Tibial artery (tissue), 4 donors: ENCODE measurements at regions of chr2 and their contacts with region 1.

Region 1: GRCh38 chr2:176653479-176654443 is 384.5 kb downstream of the MTX2 start:
- DNase-seq: peak; percentile 44 to 70
- H3K4me3 ChIP-seq: no peak overlapping the region
- H3K27ac ChIP-seq: no peak overlapping the region
- H3K4me1 ChIP-seq: peaks cover 0 to 6% (median 3%) of the 10 kb centered on the region in 4 donors
- H3K27me3 ChIP-seq: no peaks in the 10 kb centered on the region
- CTCF ChIP-seq: peak; percentile 67 to 77

Region 2: GRCh38 chr2:176445956-176446355 is 207.8 kb before region 1 on chr2:
- intact Hi-C with region 1: no loop called
- DNase-seq: no peak
- H3K4me3 ChIP-seq: no peak overlapping the region
- H3K27ac ChIP-seq: no peak overlapping the region
- H3K4me1 ChIP-seq: no peaks in the 10 kb centered on the region
- H3K27me3 ChIP-seq: no peaks in the 10 kb centered on the region
- CTCF ChIP-seq: no peak

Region 3: GRCh38 chr2:176619504-176619903 is 34.3 kb before region 1 on chr2:
- intact Hi-C with region 1: no loop called
- DNase-seq: no peak
- H3K4me3 ChIP-seq: no peak overlapping the region
- H3K27ac ChIP-seq: no peak overlapping the region
- H3K4me1 ChIP-seq: no peaks in the 10 kb centered on the region
- H3K27me3 ChIP-seq: peaks cover 0 to 8% of the 10 kb centered on the region in 2 donors
- CTCF ChIP-seq: no peak

Region 4: DNA sequence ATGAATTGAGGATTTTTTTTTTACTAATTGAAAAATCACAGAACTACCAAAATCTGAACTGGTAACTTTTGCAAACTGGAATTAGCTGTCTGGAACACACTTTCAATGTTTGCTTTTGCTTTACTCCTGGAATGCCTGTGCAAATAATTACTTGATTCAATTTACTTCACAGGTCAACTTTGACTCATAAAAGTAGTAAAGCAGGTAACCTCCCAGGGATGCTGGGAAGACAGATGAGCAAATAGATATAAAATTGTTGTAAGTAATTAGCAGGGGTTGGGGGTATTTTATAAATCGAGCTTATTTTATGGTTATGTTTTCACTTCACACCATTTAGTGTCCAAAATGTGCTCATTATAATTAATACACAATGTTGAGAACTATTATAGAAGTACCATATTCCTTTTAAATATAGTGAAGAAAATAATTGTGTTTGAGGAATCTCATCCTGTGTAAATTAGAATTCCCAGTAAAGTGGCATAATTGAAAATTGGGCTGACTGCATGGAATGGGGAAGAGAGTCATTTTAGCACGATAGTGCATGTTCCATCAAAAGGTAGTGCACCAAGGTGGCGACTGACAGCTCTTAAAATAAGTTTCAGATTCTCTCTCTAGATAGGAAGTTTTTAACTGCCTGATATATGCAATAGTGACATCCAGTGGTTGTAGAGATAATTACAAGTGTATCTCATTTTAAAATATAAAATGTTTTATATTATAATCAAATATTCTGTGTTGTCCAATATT is 160.7 kb after region 1 on chr2:
- intact Hi-C with region 1: loop called (anchors 5 kb)
- DNase-seq: no peak
- H3K4me3 ChIP-seq: no peak overlapping the region
- H3K27ac ChIP-seq: no peak overlapping the region
- H3K4me1 ChIP-seq: peaks cover 0 to 18% (median 11%) of the 10 kb centered on the region in 4 donors
- H3K27me3 ChIP-seq: peaks cover 0 to 7% of the 10 kb centered on the region in 2 donors
- CTCF ChIP-seq: peak; percentile 45 to 67